ENCODE measurements at regions of chr3 and their contacts with region 1.

Region 1: DNA sequence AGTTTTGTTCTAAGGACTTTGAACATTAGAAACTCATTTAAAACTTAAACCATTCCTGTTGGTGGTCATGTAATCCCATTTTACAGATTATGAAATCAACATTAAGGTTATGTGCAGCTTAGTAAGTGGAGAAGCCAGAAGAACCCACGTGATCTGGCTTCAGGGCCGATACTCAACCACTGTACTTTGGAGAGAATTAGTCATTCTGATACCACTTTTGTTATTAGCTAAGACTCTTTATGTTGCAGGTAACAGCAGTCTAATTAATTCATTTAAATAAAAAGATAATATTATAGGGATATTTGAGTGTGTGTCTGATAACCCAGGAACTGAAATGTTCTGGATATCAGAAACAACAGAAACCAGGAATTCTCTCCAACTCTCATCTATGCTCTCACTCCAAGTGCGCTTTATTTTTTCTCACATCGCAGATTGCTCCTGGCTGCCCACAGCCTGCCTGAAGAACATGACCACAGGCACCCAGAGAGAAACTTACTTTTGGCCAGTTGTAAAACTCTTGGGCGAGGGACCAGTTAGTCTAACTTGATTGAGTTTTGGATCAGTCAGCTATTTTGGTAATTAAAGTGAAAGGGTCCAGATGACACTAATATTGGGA is 25.2 kb downstream of the UBE2E1 start:
- DNase-seq: no peak
- ATAC-seq: no peak
- H3K4me3 ChIP-seq: no peak overlapping the region
- H3K4me3 Mint-ChIP-seq: no peak overlapping the region
- H3K27ac ChIP-seq: no peak overlapping the region
- H3K27ac Mint-ChIP-seq: no peak overlapping the region
- H3K4me1 ChIP-seq: peaks cover 0 to 3% of the 10 kb centered on the region in 2 experiments
- H3K4me1 Mint-ChIP-seq: peaks cover 51 to 65% (median 64%) of the 10 kb centered on the region in 3 donors
- H3K27me3 ChIP-seq: no peaks in the 10 kb centered on the region
- H3K27me3 Mint-ChIP-seq: no peaks in the 10 kb centered on the region

Region 2: GRCh38 chr3:23804428-23805209 is 26.4 kb before region 1 on chr3:
- CTCF ChIA-PET with region 1: interaction called, 3 to 11 read pairs
- POLR2A ChIA-PET with region 1: interaction called, 3 to 6 read pairs
- DNase-seq: no peak
- ATAC-seq: no peak
- H3K4me3 ChIP-seq: no peak overlapping the region
- H3K4me3 Mint-ChIP-seq: peak overlapping the region; percentile 13 to 98 (median 41)
- H3K27ac ChIP-seq: peak overlapping the region; percentile 12
- H3K27ac Mint-ChIP-seq: peak overlapping the region; percentile 80 to 88
- H3K4me1 ChIP-seq: peaks cover 18 to 19% of the 10 kb centered on the region in 2 experiments
- H3K4me1 Mint-ChIP-seq: peaks cover 32 to 35% (median 34%) of the 10 kb centered on the region in 3 donors
- H3K27me3 ChIP-seq: no peaks in the 10 kb centered on the region
- H3K27me3 Mint-ChIP-seq: no peaks in the 10 kb centered on the region

Region 3: DNA sequence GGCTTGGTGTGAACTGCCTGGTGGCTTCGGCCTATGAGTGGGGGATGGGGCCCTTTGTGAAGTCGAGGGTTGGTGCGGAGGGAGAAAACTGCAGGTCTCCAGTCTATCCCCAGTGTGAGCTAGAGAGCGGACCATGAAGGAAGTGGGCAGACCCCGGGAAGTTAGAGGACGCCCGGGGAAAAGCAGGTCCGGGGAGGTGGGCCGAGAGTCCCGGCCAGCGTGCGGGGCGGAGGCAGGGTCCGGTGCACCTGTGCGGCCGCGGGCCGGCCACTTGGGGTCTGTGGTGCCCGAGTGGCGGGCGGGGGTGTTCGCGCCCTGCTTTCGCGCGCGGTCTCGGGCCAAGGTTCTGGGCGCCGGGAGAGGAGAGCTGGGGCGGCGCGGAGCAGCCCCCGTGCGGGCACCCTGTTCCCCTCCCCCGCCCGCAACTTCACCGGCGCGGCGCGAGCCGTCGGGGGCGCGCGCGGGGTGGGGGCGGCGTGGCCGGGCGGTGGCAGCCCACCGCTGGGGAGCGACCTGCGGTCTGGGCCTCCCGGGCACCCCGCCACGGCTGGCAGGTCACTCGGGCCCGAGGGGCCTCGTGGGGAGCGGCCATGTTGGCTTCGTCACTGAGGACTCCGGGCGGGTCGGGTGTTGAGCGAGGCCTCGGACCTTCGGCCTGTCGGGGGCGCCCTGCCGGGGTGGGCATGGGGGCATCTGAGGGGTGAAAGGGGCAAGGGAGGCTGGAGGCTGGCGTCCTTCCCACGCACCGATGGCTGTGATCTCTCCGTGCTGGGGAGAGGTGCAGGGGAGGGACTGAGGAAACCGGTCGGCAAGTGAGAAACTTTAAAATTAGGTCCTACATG is 20.4 kb before region 1 on chr3:
- CTCF ChIA-PET with region 1: interaction called, 3 read pairs
- POLR2A ChIA-PET with region 1: interaction called, 3 to 10 read pairs
- DNase-seq: peak in 24 of 35 experiments; percentile 1 to 46 (median 16)
- ATAC-seq: peak; percentile 10 to 25 (median 24)
- H3K4me3 ChIP-seq: peak overlapping the region; percentile 68 to 80
- H3K4me3 Mint-ChIP-seq: peak overlapping the region; percentile 96 to 98 (median 98)
- H3K27ac ChIP-seq: peak overlapping the region; percentile 64
- H3K27ac Mint-ChIP-seq: peak overlapping the region; percentile 92 to 96
- H3K4me1 ChIP-seq: peaks cover 24 to 33% of the 10 kb centered on the region in 2 experiments
- H3K4me1 Mint-ChIP-seq: peaks cover 65 to 76% (median 66%) of the 10 kb centered on the region in 3 donors
- H3K27me3 ChIP-seq: no peaks in the 10 kb centered on the region
- H3K27me3 Mint-ChIP-seq: no peaks in the 10 kb centered on the region

Region 4: GRCh38 chr3:23991683-23992628 is 161.0 kb after region 1 on chr3:
- CTCF ChIA-PET with region 1: no interaction called
- POLR2A ChIA-PET with region 1: no interaction called
- DNase-seq: no peak
- ATAC-seq: peak in 2 of 4 experiments; percentile 26 to 42
- H3K4me3 ChIP-seq: no peak overlapping the region
- H3K4me3 Mint-ChIP-seq: no peak overlapping the region
- H3K27ac ChIP-seq: no peak overlapping the region
- H3K27ac Mint-ChIP-seq: no peak overlapping the region
- H3K4me1 ChIP-seq: peaks cover 0 to 6% of the 10 kb centered on the region in 2 experiments
- H3K4me1 Mint-ChIP-seq: peaks cover 11 to 13% (median 12%) of the 10 kb centered on the region in 3 donors
- H3K27me3 ChIP-seq: no peaks in the 10 kb centered on the region
- H3K27me3 Mint-ChIP-seq: no peaks in the 10 kb centered on the region

Measured in T-cell (primary cell).